ENCODE measurements at regions of chr4 and their contacts with region 1.

Region 1: DNA sequence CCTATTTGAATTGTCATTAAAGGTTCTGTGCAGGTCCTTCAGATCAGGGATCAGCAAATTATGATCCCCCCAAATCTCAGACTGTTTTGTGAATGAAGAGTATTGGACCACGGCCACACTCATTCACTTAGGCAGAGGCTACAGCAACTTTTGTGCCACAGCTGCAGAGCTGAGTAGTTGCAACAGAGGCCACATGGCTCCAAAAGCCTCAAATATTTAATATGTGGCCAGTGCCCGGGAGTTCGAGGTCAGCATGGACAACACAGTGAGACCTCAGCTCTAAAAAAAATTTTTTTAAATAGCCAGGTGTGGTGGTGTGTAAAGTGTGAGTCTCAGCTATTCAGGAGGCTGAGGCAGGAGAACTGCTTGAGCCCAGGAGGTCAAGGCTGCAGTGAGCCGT is 100.7 kb downstream of the NSUN7 start:
- DNase-seq: peak in 3 of 42 donors; percentile 7 to 35 (median 22)

Region 2: GRCh38 chr4:40890764-40891163 is 40.3 kb after region 1 on chr4:
- intact Hi-C with region 1: loop called (anchors 5 kb)
- DNase-seq: peak in 1 of 42 donors; percentile 2

Region 3: GRCh38 chr4:41538017-41538733 is 687.7 kb after region 1 on chr4 and contains the start of gene LIMCH1:
- intact Hi-C with region 1: no loop called
- DNase-seq: peak in 6 of 42 donors; percentile 3 to 45 (median 17)

Measured in head of caudate nucleus (tissue), 42 donors.